Activated CD4-positive, alpha-beta T cell treated with anti-CD3 and anti-CD28 coated beads for 36 hours (primary cell): ENCODE measurements at regions of chr12 and their contacts with region 1.

Region 1: GRCh38 chr12:49088190-49088931 is 6.2 kb downstream of the DHH start:
- DNase-seq: peak; percentile 82
- ATAC-seq: peak; percentile 91
- H3K4me3 Mint-ChIP-seq: no peak overlapping the region
- H3K27ac Mint-ChIP-seq: no peak overlapping the region
- H3K4me1 Mint-ChIP-seq: peaks cover 35% of the 10 kb centered on the region
- H3K27me3 Mint-ChIP-seq: peaks cover 48% of the 10 kb centered on the region

Region 2: GRCh38 chr12:48890657-48891418 is 197.5 kb before region 1 on chr12:
- CTCF ChIA-PET with region 1: no interaction called
- POLR2A ChIA-PET with region 1: no interaction called
- intact Hi-C with region 1: no loop called
- DNase-seq: peak; percentile 89
- ATAC-seq: peak; percentile 99
- H3K4me3 Mint-ChIP-seq: peak overlapping the region; percentile 4
- H3K27ac Mint-ChIP-seq: no peak overlapping the region
- H3K4me1 Mint-ChIP-seq: peaks cover 4% of the 10 kb centered on the region
- H3K27me3 Mint-ChIP-seq: peaks cover 14% of the 10 kb centered on the region

Region 3: DNA sequence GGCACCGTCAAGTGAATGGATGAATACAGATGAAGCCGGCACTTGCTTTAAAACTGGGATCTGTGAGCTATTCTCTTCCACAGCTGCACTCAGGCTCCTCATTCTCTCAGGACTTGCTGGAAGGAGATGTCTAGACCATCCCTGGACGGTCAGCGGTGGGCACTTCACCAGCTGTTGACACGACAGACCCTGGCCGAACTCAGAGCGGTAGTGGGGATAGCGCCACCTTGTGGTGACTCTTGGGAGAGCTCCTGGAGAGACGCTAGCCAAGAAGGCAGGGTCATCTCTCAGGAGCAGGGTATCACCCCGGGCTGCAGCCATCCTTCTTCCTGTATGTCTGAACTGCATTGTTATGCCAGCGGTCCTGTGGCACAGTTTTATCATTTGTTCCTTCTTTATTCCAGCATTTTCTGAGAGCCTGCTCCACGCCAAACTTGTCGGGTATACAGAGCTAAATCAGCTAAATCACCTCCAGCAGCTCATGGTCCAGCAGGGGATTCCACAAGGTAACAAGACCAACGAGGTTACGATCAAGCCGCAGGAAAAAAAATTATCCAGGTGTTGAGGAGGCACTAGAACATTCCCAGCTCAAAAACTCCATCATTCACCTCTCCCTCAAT is 100.2 kb before region 1 on chr12:
- CTCF ChIA-PET with region 1: interaction called, 19 read pairs
- POLR2A ChIA-PET with region 1: no interaction called
- intact Hi-C with region 1: loop called in 1 of 2 experiments (anchors 5 kb)
- DNase-seq: peak; percentile 89
- ATAC-seq: peak; percentile 85
- H3K4me3 Mint-ChIP-seq: no peak overlapping the region
- H3K27ac Mint-ChIP-seq: no peak overlapping the region
- H3K4me1 Mint-ChIP-seq: no peaks in the 10 kb centered on the region
- H3K27me3 Mint-ChIP-seq: peaks cover 41% of the 10 kb centered on the region

Region 4: DNA sequence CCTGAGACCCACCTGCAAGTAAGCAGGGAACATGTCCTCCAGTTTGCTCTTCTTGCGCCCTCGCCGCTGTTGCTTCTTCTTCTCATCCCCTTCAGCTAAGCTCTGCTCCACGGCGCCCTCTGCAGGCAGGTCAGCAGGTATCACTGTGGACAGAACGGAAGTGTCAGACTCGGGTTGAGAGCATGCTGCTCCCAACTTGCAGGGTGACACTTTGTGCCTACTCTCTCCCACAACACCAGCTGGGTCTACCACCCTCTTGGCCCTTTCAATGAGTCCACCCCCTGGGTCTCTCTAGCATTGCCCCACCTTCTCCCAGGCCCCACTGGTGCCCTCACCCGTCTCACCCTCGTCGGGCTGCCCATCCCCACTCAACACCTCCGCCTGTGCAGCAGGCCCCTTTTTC is 44.5 kb before region 1 on chr12:
- CTCF ChIA-PET with region 1: interaction called, 10 read pairs
- POLR2A ChIA-PET with region 1: no interaction called
- intact Hi-C with region 1: no loop called
- DNase-seq: peak; percentile 91
- ATAC-seq: peak; percentile 91
- H3K4me3 Mint-ChIP-seq: no peak overlapping the region
- H3K27ac Mint-ChIP-seq: no peak overlapping the region
- H3K4me1 Mint-ChIP-seq: peaks cover 2% of the 10 kb centered on the region
- H3K27me3 Mint-ChIP-seq: no peaks in the 10 kb centered on the region

Region 5: GRCh38 chr12:49069507-49070346 is 18.6 kb before region 1 on chr12 and contains the start of gene RHEBL1:
- CTCF ChIA-PET with region 1: interaction called, 124 read pairs
- POLR2A ChIA-PET with region 1: interaction called, 3 read pairs
- intact Hi-C with region 1: loop called (anchors 1 kb)
- DNase-seq: peak; percentile 100
- ATAC-seq: peak; percentile 100
- H3K4me3 Mint-ChIP-seq: peak within 1 kb of the TSS; percentile 94
- H3K27ac Mint-ChIP-seq: peak within 1 kb of the TSS; percentile 91
- H3K4me1 Mint-ChIP-seq: peaks cover 15% of the 10 kb centered on the region
- H3K27me3 Mint-ChIP-seq: no peaks in the 10 kb centered on the region
- total RNA-seq, gene RHEBL1: 6.7 to 13.3 TPM

Region 6: GRCh38 chr12:49110464-49111155 is 22.2 kb after region 1 on chr12 and contains the start of gene LMBR1L:
- CTCF ChIA-PET with region 1: interaction called, 43 read pairs
- POLR2A ChIA-PET with region 1: interaction called, 3 read pairs
- intact Hi-C with region 1: no loop called
- DNase-seq: peak; percentile 97
- ATAC-seq: peak; percentile 98
- H3K4me3 Mint-ChIP-seq: peak within 1 kb of the TSS; percentile 96
- H3K27ac Mint-ChIP-seq: peak within 1 kb of the TSS; percentile 98
- H3K4me1 Mint-ChIP-seq: peaks cover 29% of the 10 kb centered on the region
- H3K27me3 Mint-ChIP-seq: no peaks in the 10 kb centered on the region
- total RNA-seq, gene LMBR1L: 45.0 to 48.0 TPM

Region 7: GRCh38 chr12:49188914-49189367 is 100.6 kb after region 1 on chr12 and contains the start of gene TUBA1A:
- CTCF ChIA-PET with region 1: interaction called, 10 read pairs
- POLR2A ChIA-PET with region 1: interaction called, 5 read pairs
- intact Hi-C with region 1: no loop called
- DNase-seq: peak; percentile 97
- ATAC-seq: peak; percentile 95
- H3K4me3 Mint-ChIP-seq: peak within 1 kb of the TSS; percentile 92
- H3K27ac Mint-ChIP-seq: peak within 1 kb of the TSS; percentile 92
- H3K4me1 Mint-ChIP-seq: peaks cover 24% of the 10 kb centered on the region
- H3K27me3 Mint-ChIP-seq: no peaks in the 10 kb centered on the region
- total RNA-seq, gene TUBA1A: 75.7 to 98.5 TPM

Region 8: DNA sequence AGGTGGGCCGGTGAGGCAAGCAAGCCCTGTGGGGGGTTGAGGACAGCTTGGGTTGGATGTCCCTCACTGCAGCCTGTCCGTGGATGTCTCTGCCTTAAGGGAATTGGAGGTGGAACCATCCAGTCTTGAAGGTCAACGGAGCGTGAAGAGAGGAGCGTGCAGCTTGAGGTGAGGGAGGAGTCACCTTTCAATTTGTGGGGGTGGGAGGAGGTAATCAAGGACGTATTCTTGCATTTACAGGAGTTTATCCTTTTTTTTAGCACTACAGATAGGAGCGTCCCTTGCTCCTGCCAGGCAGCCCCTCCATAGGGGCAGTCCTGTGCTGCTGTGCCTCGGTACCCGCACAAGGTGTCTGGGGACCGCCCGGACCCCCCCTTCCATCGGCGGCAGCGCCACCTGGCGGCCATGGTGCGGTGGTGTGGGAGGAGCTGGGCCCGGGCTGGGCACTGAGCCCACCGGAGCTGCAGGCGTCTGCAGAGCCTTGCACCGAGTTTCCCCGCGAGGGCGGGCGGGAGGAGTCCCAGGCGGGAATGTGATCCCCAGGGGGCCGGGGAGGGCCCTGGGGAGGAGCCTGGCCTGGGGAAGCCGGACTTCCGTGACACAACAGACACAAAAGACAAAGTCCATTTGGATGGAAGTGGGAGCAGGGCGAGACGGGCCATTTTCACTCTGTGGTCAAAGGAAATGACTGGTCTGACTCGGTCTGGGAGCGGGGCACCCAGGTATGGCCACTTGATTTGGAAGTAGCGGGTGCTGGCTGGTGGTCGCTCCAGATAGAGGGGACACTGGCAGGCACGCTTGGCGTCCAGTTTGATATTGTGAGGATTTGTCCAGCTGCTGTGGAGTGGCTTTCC is 259.2 kb after region 1 on chr12:
- CTCF ChIA-PET with region 1: interaction called, 3 read pairs
- POLR2A ChIA-PET with region 1: no interaction called
- intact Hi-C with region 1: loop called in 1 of 2 experiments (anchors 1 kb)
- DNase-seq: peak; percentile 84
- ATAC-seq: peak; percentile 67
- H3K4me3 Mint-ChIP-seq: peak overlapping the region; percentile 29
- H3K27ac Mint-ChIP-seq: no peak overlapping the region
- H3K4me1 Mint-ChIP-seq: peaks cover 39% of the 10 kb centered on the region
- H3K27me3 Mint-ChIP-seq: peaks cover 54% of the 10 kb centered on the region